ENCODE measurements at regions of chr7 and their contacts with region 1.

Region 1: DNA sequence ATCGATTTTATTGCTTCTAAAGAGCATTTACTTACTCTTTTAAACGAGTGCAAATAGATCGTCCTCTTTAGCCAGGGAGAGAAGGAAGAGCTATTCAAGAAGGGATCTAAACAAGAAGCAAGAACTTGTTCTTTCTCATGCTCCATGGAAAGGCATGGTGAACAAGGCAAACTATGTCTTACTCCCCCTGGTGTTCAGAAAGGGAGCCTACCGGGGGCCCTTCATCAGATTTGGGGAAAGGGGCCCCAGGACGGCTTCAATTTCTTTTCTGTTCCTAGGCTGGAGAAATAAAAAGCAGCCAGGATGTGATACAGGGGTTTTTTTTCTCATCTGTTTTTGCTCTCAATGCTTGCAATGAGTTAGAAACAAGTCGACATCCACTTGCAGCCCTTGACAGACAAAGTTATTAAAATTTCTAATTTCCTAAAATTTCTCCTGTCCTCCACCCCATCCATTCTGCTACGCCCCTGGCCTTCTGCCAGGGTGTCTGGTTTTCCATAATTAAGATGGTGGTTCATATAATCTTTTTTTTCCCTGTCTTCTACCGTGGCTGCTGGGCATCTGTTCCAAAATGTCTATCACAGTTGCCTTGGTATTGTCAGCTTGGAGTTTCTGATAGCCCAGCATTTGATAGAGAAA is 214.4 kb downstream of the CREB5 start:
- DNase-seq: no peak
- H3K4me3 ChIP-seq: no peak overlapping the region
- H3K27ac ChIP-seq: peak overlapping the region in 3 of 4 donors; percentile 45 to 61 (median 61)
- H3K4me1 ChIP-seq: peaks cover 0 to 30% (median 4%) of the 10 kb centered on the region in 3 donors
- H3K27me3 ChIP-seq: peaks cover 0 to 8% (median 0%) of the 10 kb centered on the region in 4 donors
- CTCF ChIP-seq: peak; percentile 20 to 74 (median 64)
- POLR2A ChIP-seq: no peak

Region 2: GRCh38 chr7:28298870-28299518 is 327.7 kb before region 1 on chr7:
- intact Hi-C with region 1: loop called (anchors 10 kb)
- DNase-seq: no peak
- H3K4me3 ChIP-seq: no peak overlapping the region
- H3K27ac ChIP-seq: no peak overlapping the region
- H3K4me1 ChIP-seq: peaks cover 0 to 26% (median 0%) of the 10 kb centered on the region in 3 donors
- H3K27me3 ChIP-seq: no peaks in the 10 kb centered on the region
- CTCF ChIP-seq: peak in 5 of 6 experiments; percentile 35 to 60 (median 47)
- POLR2A ChIP-seq: no peak

Region 3: DNA sequence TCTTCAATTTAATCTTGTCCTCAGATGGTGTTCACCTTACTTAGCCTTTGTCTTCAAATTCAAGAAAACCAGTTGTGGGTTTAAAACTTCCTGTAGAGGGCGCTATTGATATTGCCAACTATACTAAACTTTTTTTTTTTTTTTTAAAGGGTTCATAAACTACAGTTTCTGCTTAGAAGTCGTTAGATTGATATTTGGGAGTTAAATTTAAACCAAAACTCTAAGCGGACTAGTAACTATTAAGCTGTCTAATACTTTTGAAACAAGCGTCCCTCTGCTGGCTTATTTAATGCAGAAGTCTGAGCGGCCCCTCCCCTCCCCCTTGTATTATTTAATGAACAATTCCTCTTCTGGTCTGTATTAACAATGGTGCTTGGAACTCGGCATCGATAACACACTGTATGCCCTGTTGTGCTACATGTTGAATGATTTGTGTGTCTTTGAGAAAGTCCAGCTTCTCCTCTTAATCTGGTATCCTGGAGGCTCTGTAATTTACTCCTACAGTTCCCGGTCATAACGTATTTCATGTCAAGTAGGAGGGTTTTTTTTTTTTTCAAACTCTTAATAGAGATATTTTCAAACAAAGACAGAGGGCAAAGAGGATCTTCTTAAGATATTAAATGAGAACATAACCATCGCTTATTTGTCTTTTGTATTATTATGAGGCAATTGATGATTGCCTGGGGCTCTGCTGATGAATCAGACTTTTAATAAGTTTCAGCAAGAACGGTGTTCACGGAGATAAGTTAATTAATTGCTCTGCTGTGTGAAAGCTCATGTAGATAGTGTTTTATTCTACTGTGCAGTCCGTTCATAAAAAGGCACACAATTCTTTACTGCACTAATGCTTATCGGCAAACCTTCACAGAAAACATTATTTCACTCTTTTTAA is 237.0 kb before region 1 on chr7:
- intact Hi-C with region 1: loop called (anchors 10 kb)
- DNase-seq: no peak
- H3K4me3 ChIP-seq: peak overlapping the region in 3 of 4 donors; percentile 28 to 46 (median 30)
- H3K27ac ChIP-seq: peak overlapping the region in 2 of 4 donors; percentile 31 to 39
- H3K4me1 ChIP-seq: peaks cover 0 to 12% (median 2%) of the 10 kb centered on the region in 3 donors
- H3K27me3 ChIP-seq: no peaks in the 10 kb centered on the region
- CTCF ChIP-seq: peak; percentile 47 to 83 (median 69)
- POLR2A ChIP-seq: no peak

Region 4: DNA sequence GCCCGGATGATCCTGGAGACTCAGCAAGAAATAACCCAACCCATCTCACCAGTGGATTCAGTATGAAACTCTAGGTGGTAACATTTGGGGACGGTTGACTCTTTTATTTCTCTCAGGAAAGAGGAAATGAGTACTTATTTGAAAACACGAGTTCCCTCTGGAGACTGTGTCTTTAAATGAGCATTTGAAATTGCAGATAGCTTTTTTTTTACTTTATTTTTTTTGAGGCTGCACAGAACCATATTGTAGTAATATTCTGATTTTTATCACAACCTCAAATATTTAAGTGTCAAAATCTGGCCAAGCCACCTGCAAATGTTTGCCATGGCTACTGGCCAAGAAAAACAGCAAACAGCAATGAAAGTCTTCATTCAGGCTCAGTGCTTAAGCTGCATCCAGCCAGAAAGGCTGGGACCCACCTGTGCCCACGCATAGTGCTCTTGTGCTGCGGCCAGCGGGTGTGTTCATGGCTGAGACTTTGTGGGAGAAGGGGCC is 53.6 kb before region 1 on chr7:
- intact Hi-C with region 1: no loop called
- DNase-seq: no peak
- H3K4me3 ChIP-seq: no peak overlapping the region
- H3K27ac ChIP-seq: no peak overlapping the region
- H3K4me1 ChIP-seq: peaks cover 0 to 10% (median 0%) of the 10 kb centered on the region in 3 donors
- H3K27me3 ChIP-seq: peaks cover 0 to 8% (median 0%) of the 10 kb centered on the region in 4 donors
- CTCF ChIP-seq: no peak
- POLR2A ChIP-seq: no peak

Measured in esophagus squamous epithelium (tissue), 5 donors.